Heart left ventricle (tissue), 16 donors: ENCODE measurements at regions of chr6 and their contacts with region 1.

Region 1: GRCh38 chr6:53300656-53301551 is 47.8 kb downstream of the ELOVL5 start:
- DNase-seq: peak in 4 of 5 donors; percentile 44 to 54 (median 49)
- ATAC-seq: peak; percentile 81 to 92 (median 89)
- H3K4me3 ChIP-seq: no peak overlapping the region
- H3K27ac ChIP-seq: peak overlapping the region; percentile 43 to 88 (median 77)
- H3K4me1 ChIP-seq: peaks cover 19 to 80% (median 66%) of the 10 kb centered on the region in 12 donors
- H3K27me3 ChIP-seq: no peaks in the 10 kb centered on the region
- CTCF ChIP-seq: no peak
- POLR2A ChIP-seq: no peak

Region 2: DNA sequence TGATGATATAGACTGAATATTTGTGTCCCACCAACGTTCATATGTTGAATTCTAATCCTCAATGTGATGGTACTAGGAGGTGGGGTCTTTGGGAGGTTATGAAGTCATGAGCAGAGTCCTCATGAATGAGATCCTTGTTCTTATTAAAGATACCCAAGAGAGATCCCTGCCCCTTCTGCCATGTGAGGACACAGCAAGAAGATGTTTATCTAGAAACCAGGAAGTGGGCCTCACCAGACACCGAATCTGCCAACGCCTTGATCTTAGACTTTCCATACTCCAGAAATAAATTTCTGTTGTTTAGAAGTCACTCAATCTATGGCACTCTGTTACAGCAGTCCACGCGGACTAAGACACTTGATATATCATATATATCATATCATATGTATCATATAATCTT is 84.6 kb before region 1 on chr6:
- intact Hi-C with region 1: no loop called
- DNase-seq: no peak
- ATAC-seq: no peak
- H3K4me3 ChIP-seq: no peak overlapping the region
- H3K27ac ChIP-seq: no peak overlapping the region
- H3K4me1 ChIP-seq: no peaks in the 10 kb centered on the region
- H3K27me3 ChIP-seq: no peaks in the 10 kb centered on the region
- CTCF ChIP-seq: no peak
- POLR2A ChIP-seq: no peak

Region 3: DNA sequence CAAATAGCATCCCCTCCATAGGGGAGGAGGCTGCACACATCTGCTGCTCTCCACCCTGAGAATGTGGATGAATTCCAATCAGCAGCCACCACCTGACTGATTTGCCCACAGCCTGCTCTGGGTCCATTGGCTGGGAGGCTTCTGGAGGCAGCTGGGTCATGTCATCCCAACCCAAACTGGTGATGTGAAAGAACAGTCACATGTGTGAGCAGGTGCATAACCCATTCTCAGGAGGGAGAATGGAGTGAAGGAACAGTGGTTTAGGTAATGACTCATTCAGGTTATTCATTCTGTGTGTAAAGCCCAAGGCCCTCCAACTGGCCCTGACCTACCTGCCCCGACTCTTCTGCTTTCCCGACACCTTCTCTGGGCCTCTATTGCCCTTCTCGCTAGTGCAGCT is 61.4 kb before region 1 on chr6:
- intact Hi-C with region 1: no loop called
- DNase-seq: no peak
- ATAC-seq: no peak
- H3K4me3 ChIP-seq: no peak overlapping the region
- H3K27ac ChIP-seq: no peak overlapping the region
- H3K4me1 ChIP-seq: peaks cover 0 to 19% (median 0%) of the 10 kb centered on the region in 12 donors
- H3K27me3 ChIP-seq: no peaks in the 10 kb centered on the region
- CTCF ChIP-seq: no peak
- POLR2A ChIP-seq: no peak

Region 4: DNA sequence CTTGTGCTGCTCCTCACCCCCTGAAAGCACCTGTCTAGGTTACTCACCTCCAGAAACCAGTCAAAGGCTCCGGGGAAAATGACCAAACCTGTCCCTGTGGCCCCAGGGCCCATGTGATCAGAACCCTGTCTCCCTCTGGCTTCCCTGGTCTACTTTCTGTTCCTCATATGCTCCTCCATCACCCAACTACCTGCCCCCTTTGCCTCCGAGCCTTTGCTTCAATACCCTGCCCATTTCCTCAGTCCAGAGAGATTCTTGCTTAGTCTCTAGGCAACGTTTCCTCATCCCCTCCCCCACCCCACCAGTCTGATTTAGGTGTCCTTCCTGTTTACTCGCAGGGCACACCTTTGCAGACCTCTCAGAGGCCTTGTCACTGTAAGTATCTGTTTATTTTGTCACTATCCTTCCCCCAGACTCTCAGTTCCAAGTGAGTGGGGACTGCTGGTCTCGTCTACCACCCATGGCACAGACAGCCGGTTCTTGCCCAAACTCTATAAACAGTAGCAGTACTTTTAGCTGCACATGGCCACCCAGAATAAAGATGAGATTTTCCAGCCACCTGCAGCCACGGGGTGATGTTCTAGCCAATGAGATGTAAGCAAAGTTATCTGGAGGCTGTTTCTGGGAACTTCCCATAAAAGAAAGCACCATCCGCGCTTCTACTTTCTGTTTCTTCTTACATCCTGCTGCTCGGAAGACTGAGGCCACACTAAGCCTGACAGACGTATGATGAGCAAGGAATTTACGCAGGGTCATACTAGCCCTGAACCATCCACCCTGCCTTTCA is 34.5 kb after region 1 on chr6:
- intact Hi-C with region 1: loop called in 1 of 10 experiments (anchors 5 kb)
- DNase-seq: peak in 2 of 5 donors; percentile 13 to 46
- ATAC-seq: peak; percentile 26 to 71 (median 42)
- H3K4me3 ChIP-seq: peak overlapping the region in 5 of 12 donors; percentile 13 to 42 (median 24)
- H3K27ac ChIP-seq: peak overlapping the region in 8 of 12 donors; percentile 15 to 90 (median 48)
- H3K4me1 ChIP-seq: peaks cover 0 to 77% (median 13%) of the 10 kb centered on the region in 12 donors
- H3K27me3 ChIP-seq: no peaks in the 10 kb centered on the region
- CTCF ChIP-seq: no peak
- POLR2A ChIP-seq: no peak

Region 5: GRCh38 chr6:53348371-53349208 is 47.7 kb after region 1 on chr6 and contains the start of gene ELOVL5:
- intact Hi-C with region 1: loop called in 8 of 10 experiments (anchors 2 to 5 kb)
- DNase-seq: peak; percentile 98 to 99 (median 99)
- ATAC-seq: peak; percentile 87 to 96 (median 94)
- H3K4me3 ChIP-seq: peak within 1 kb of the TSS; percentile 75 to 98 (median 90)
- H3K27ac ChIP-seq: peak within 1 kb of the TSS; percentile 89 to 100 (median 97)
- H3K4me1 ChIP-seq: peaks cover 3 to 42% (median 15%) of the 10 kb centered on the region in 12 donors
- H3K27me3 ChIP-seq: no peaks in the 10 kb centered on the region
- CTCF ChIP-seq: peak in 4 of 12 donors; percentile 7 to 14 (median 10)
- POLR2A ChIP-seq: peak; percentile 34 to 88
- total RNA-seq, gene ELOVL5: 17.3 to 47.9 (median 29.3) TPM

Region 6: DNA sequence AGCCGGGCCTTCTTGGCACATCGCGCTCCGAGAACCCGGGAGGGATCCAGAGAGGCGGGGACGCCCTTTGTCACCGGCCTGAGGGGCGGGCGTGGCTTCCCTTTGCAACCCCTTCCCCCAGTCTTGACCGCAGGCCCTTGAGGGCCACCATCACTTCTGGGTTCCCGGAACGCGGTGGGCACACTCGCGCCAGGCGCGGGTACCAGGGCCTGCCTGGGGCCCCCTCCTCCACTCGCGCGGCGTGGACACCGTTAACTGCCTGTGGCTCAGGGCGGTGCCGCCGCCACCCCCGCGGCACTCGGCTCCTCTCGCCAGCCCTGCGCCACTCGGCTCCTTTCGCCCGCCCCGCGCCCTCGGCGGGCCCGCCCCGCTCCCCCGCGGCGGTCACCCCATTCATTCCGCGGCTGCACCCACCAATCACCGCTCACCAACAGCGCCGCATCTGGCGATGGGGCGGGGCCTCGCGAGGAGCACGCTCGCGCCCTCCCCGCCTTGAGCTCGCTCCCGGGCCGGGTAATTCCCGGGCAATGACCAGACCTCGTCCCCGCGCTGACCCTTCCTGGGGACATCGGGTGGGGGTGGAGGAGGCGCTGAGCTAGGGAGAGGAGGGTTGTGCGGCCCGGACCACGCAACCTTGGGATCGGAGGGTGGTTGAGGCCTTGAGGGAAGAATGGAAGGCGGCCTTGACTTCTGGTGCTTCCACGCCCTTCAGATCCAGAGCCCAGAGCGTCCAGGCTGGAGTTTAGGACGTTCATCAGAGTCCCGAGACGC is 58.4 kb after region 1 on chr6:
- intact Hi-C with region 1: loop called in 1 of 10 experiments (anchors 5 kb)
- DNase-seq: peak; percentile 97 to 98 (median 97)
- ATAC-seq: peak; percentile 96 to 98 (median 98)
- H3K4me3 ChIP-seq: peak overlapping the region; percentile 49 to 78 (median 70)
- H3K27ac ChIP-seq: peak overlapping the region; percentile 90 to 97 (median 94)
- H3K4me1 ChIP-seq: peaks cover 0 to 29% (median 10%) of the 10 kb centered on the region in 12 donors
- H3K27me3 ChIP-seq: no peaks in the 10 kb centered on the region
- CTCF ChIP-seq: peak in 1 of 12 donors; percentile 22
- POLR2A ChIP-seq: peak; percentile 60 to 84